GM12878 (cell line): ENCODE measurements at regions of chr12 and their contacts with region 1.

Region 1: DNA sequence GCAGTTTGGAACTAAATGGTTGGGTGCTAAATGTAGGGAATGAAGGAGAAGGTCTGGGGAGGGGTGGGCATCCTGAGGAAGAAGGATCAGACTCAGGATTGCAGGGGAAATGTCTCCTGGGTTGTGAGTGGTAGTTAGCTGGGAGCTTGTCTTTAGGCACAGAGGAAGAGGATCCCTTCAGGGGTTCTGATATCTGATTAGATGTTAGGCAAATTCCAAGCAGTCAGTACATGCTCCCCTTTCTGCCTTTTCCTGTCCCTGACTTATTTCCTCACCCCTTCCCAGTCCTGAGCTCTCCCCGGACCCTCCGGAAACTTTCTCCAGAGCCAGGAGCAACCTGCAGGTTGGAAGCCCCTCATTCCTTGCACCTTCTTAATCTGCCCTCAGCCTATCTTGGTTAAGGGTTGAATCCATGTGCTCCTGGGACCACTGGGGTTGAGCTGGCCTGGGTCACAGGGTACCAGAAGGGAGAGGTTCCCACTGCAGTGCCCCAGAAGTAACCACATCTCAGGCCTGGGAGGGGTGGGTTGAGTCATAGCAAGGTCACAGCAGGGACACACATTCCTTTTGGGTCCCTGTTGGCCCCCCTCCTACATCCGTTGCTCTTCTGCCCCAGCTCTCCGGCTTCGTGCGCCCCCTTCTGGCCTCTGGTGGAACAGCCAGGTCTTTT is 1.6 kb downstream of the IGFBP6 start:
- DNase-seq: no peak
- ATAC-seq: peak; percentile 44
- H3K4me3 ChIP-seq: no peak overlapping the region
- H3K27ac ChIP-seq: no peak overlapping the region
- H3K4me1 ChIP-seq: peaks cover 28% of the 10 kb centered on the region
- H3K27me3 ChIP-seq: peaks cover 0 to 6% of the 10 kb centered on the region in 2 experiments; a peak in 2 of 4 replicates
- CTCF ChIP-seq: peak; percentile 83 to 94 (median 89)
- EP300 ChIP-seq: no peak
- POLR2A ChIP-seq: no peak
- RAD21 ChIP-seq: peak; percentile 86

Region 2: DNA sequence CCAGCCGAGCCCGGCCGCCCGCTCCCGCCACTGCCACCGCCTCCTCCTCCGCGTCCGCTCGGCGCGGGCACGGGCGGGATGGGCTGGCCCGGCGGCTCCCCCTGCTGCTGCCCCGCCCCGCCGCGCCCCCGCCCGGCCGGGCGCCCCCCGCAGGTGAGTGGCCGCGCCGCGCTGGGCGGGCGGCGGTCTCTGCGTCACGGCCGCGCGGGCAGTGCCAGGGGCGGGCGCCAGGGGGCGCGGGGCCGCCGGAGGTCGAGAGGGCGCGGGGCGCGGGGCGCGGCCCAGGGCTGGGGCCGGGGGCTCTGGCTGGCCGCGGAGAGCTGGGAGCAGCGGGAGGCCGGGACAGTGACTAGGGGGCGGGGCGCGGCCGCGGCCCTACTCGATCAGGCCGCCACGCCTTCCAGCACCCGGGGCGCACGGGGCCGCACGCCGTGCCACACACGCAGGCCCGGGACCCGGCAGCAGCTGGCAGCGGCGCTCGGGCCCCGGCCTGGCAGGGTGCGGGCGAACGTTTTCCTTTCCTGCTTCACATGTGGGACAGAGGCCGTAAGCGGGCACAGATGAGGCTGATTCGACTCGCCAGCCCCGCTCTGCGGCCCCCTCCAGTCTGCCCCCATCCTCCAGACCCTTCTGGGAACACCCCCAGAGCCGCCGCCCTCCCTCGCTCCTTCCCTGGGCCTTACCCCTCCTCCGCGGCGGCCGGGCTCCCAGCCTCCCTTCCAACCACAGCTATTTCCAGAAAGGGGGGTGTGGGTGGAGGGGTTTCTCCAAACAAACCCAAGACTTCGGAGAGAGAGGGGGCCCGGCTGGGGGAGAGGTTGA is 51.7 kb before region 1 on chr12:
- CTCF ChIA-PET with region 1: interaction called, 12 read pairs
- POLR2A ChIA-PET with region 1: interaction called, 4 read pairs
- RAD21 ChIA-PET with region 1: interaction called, 4 read pairs
- SMC1A ChIA-PET with region 1: interaction called, 3 read pairs
- in situ Hi-C with region 1: no loop called
- intact Hi-C with region 1: loop called (anchors 5 kb)
- DNase-seq: no peak
- ATAC-seq: peak; percentile 66
- H3K4me3 ChIP-seq: peak overlapping the region; percentile 36; the same call in 1 of the 2 replicates
- H3K27ac ChIP-seq: no peak overlapping the region
- H3K4me1 ChIP-seq: peaks cover 15% of the 10 kb centered on the region
- H3K27me3 ChIP-seq: no peaks in the 10 kb centered on the region
- CTCF ChIP-seq: peak in 1 of 3 experiments; percentile 49; a peak in 3 of 6 replicates
- EP300 ChIP-seq: no peak
- POLR2A ChIP-seq: 0 out of 2 replicates have a peak, but pooled peaks have one; percentile 32
- RAD21 ChIP-seq: no peak

Region 3: GRCh38 chr12:53054112-53054833 is 44.8 kb before region 1 on chr12:
- CTCF ChIA-PET with region 1: interaction called, 17 read pairs
- POLR2A ChIA-PET with region 1: interaction called, 6 read pairs
- RAD21 ChIA-PET with region 1: interaction called, 7 read pairs
- SMC1A ChIA-PET with region 1: interaction called, 3 read pairs
- in situ Hi-C with region 1: no loop called
- intact Hi-C with region 1: loop called (anchors 5 kb)
- DNase-seq: peak; percentile 61
- ATAC-seq: peak; percentile 92
- H3K4me3 ChIP-seq: peak overlapping the region; percentile 80
- H3K27ac ChIP-seq: no peak overlapping the region
- H3K4me1 ChIP-seq: peaks cover 8% of the 10 kb centered on the region
- H3K27me3 ChIP-seq: no peaks in the 10 kb centered on the region
- CTCF ChIP-seq: peak in 1 of 3 experiments; percentile 4; a peak in 1 of 6 replicates
- EP300 ChIP-seq: no peak
- POLR2A ChIP-seq: peak; percentile 67; the same call in 1 of the 2 replicates
- RAD21 ChIP-seq: no peak

Region 4: DNA sequence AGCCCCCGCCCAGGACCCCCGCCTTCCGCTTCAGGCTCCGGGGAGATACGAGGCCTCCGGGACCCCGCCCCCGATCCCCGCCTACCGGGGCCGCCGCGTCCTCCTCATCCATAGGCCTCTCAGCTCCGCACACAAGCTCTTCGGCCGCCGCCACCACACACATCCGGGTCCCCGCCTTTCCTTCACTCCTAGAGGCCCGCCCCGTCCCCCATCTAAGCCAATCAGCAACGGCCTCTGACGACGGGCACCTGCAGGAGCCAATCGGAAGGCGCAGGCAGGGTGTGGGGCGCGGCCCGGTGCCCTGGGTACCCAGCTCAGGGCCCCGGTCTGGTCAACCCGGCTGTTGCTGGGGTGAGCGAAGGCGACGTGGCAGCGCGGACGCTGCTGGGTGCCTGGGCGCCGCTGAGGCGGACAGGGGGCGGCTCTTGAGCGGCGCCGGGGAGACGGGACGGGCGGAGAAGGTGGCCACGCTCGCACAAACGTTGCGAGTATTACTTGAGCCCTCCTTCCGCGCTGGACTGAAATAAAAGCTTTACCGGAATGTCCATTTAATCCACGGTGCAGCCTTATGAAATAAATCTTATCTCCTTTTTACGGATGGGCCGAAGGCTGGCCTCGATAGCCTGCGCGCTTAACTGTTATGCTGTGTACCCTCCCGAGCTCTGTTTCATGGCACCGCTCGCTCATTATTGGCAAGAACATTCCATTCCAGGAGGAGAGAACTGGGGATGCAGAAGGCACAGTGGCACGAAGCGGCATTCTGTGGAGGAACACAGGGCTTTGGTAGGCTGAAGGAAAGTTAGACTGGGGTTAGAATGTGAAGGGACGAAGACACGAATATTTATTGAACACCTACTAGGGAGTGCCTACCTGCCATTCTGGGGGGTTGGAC is 19.6 kb before region 1 on chr12 and contains the start of gene SPRYD3:
- CTCF ChIA-PET with region 1: interaction called, 355 read pairs
- POLR2A ChIA-PET with region 1: interaction called, 12 read pairs
- RAD21 ChIA-PET with region 1: interaction called, 25 read pairs
- SMC1A ChIA-PET with region 1: interaction called, 13 read pairs
- in situ Hi-C with region 1: no loop called
- intact Hi-C with region 1: no loop called
- DNase-seq: peak; percentile 77
- ATAC-seq: peak; percentile 99
- H3K4me3 ChIP-seq: peak within 1 kb of the TSS; percentile 90
- H3K27ac ChIP-seq: peak within 1 kb of the TSS; percentile 74
- H3K4me1 ChIP-seq: no peaks in the 10 kb centered on the region; the same call in none of the 2 replicates
- H3K27me3 ChIP-seq: no peaks in the 10 kb centered on the region
- CTCF ChIP-seq: no peak
- EP300 ChIP-seq: no peak
- POLR2A ChIP-seq: peak; percentile 95
- RAD21 ChIP-seq: no peak
- polyA plus RNA-seq, gene SPRYD3: 2.3 to 3.5 TPM

Region 5: GRCh38 chr12:53115112-53115890 is 16.2 kb after region 1 on chr12:
- CTCF ChIA-PET with region 1: interaction called, 18 read pairs
- POLR2A ChIA-PET with region 1: interaction called, 5 read pairs
- RAD21 ChIA-PET with region 1: interaction called, 8 read pairs
- SMC1A ChIA-PET with region 1: interaction called, 10 read pairs
- in situ Hi-C with region 1: no loop called
- intact Hi-C with region 1: no loop called
- DNase-seq: no peak
- ATAC-seq: peak; percentile 66
- H3K4me3 ChIP-seq: no peak overlapping the region
- H3K27ac ChIP-seq: no peak overlapping the region
- H3K4me1 ChIP-seq: no peaks in the 10 kb centered on the region
- H3K27me3 ChIP-seq: no peaks in the 10 kb centered on the region
- CTCF ChIP-seq: no peak
- EP300 ChIP-seq: no peak
- POLR2A ChIP-seq: no peak
- RAD21 ChIP-seq: no peak

Region 6: GRCh38 chr12:53145383-53146260 is 46.5 kb after region 1 on chr12:
- CTCF ChIA-PET with region 1: no interaction called
- POLR2A ChIA-PET with region 1: no interaction called
- RAD21 ChIA-PET with region 1: no interaction called
- SMC1A ChIA-PET with region 1: no interaction called
- in situ Hi-C with region 1: no loop called
- intact Hi-C with region 1: no loop called
- DNase-seq: no peak
- ATAC-seq: no peak
- H3K4me3 ChIP-seq: no peak overlapping the region
- H3K27ac ChIP-seq: no peak overlapping the region
- H3K4me1 ChIP-seq: no peaks in the 10 kb centered on the region
- H3K27me3 ChIP-seq: no peaks in the 10 kb centered on the region
- CTCF ChIP-seq: no peak
- EP300 ChIP-seq: no peak
- POLR2A ChIP-seq: no peak
- RAD21 ChIP-seq: no peak

Region 7: DNA sequence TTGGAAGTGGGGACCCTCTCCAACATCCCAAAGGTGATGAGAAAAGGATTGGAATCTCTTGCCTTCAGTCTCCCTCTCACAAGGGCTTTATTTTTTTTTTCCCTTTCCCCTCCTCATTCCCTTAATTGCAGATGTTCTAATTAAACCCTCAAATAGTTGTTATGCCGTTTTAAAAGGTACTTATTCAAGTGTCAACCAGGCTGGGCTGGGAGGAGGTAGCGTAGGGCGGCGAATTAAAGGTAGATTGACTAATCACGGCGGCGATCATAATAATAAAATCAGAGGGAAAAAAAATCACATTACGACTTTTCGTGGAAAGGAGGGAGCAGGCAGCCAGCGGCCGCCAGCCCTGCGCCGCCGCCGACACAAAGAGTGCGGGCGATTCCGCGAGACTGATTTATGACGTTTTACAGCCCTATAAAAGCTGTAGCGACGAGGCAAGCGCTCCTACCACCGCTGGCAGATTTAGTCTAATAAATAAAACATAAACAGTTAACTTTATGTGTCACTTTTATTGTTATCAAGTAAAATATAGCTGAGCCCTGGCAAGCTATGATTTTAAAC is 952.8 kb after region 1 on chr12:
- CTCF ChIA-PET with region 1: no interaction called
- POLR2A ChIA-PET with region 1: no interaction called
- RAD21 ChIA-PET with region 1: no interaction called
- SMC1A ChIA-PET with region 1: no interaction called
- in situ Hi-C with region 1: no loop called
- intact Hi-C with region 1: no loop called
- DNase-seq: no peak
- ATAC-seq: no peak
- H3K4me3 ChIP-seq: no peak overlapping the region
- H3K27ac ChIP-seq: no peak overlapping the region; the same call in 1 of the 2 replicates
- H3K4me1 ChIP-seq: peaks cover 22% of the 10 kb centered on the region
- H3K27me3 ChIP-seq: peaks cover 4% of the 10 kb centered on the region in 2 experiments; a peak in 3 of 4 replicates
- CTCF ChIP-seq: no peak
- EP300 ChIP-seq: no peak
- POLR2A ChIP-seq: no peak
- RAD21 ChIP-seq: no peak